Heart left ventricle (tissue), 16 donors: ENCODE measurements at regions of chr5 and their contacts with region 1.

Region 1: GRCh38 chr5:55691265-55692105 is 20.6 kb downstream of the SLC38A9 start:
- DNase-seq: no peak
- ATAC-seq: peak; percentile 34 to 73 (median 56)
- H3K4me3 ChIP-seq: peak overlapping the region in 3 of 12 donors; percentile 3 to 36 (median 17)
- H3K27ac ChIP-seq: peak overlapping the region in 8 of 12 donors; percentile 8 to 64 (median 34)
- H3K4me1 ChIP-seq: peaks cover 5 to 33% (median 19%) of the 10 kb centered on the region in 12 donors
- H3K27me3 ChIP-seq: no peaks in the 10 kb centered on the region
- CTCF ChIP-seq: peak; percentile 55 to 80 (median 74)
- POLR2A ChIP-seq: no peak

Region 2: DNA sequence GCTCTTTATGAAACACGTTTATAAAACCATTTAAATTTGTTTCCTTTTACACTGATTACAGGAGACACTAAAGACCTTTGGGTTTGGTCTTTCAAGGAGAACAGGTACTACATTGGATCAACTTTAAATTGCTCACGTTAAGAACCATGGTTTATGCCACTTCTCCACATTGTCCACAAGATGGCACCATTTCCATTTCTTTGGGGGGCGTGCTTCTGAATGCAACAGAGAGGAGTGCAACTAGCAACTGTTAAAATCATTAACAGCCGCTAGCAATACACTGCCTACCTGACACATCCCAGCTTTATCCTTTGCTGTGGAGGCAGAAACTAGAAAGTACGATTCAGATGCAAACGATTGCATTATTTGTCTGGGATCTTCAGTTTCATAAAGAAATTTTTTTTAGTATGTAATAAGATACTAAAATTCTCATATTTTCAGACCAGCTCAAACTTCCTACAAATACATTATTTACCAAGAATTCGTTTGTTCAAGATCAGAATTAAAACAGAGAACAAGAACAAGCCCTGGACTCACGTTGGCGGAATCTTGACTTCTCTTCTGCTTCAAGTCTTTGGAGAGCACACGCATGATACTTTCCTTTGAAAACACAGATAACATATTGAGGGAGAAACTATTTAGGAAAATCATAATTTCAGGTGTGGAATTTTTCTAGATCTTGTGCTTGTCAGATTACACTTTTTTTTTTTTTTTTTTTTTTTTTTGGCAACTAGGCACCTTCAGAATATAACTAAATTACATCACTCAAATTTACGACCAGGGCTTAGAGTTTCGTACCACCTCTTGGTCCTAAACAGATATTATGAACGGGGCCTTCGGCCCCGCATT is 519.2 kb before region 1 on chr5:
- intact Hi-C with region 1: loop called in 6 of 10 experiments (anchors 2 to 10 kb)
- DNase-seq: peak in 3 of 5 donors; percentile 30 to 54 (median 33)
- ATAC-seq: peak; percentile 77 to 86 (median 81)
- H3K4me3 ChIP-seq: peak overlapping the region; percentile 29 to 63 (median 50)
- H3K27ac ChIP-seq: no peak overlapping the region
- H3K4me1 ChIP-seq: peaks cover 5 to 32% (median 24%) of the 10 kb centered on the region in 12 donors
- H3K27me3 ChIP-seq: peaks cover 26 to 65% (median 43%) of the 10 kb centered on the region in 9 donors
- CTCF ChIP-seq: peak; percentile 74 to 89 (median 81)
- POLR2A ChIP-seq: no peak

Region 3: GRCh38 chr5:55344392-55344992 is 347.0 kb before region 1 on chr5:
- intact Hi-C with region 1: loop called (anchors 1 to 5 kb)
- DNase-seq: peak in 2 of 5 donors; percentile 32 to 42
- ATAC-seq: peak in 1 of 4 donors; percentile 34
- H3K4me3 ChIP-seq: no peak overlapping the region
- H3K27ac ChIP-seq: no peak overlapping the region
- H3K4me1 ChIP-seq: no peaks in the 10 kb centered on the region
- H3K27me3 ChIP-seq: no peaks in the 10 kb centered on the region
- CTCF ChIP-seq: peak; percentile 79 to 92 (median 88)
- POLR2A ChIP-seq: no peak

Region 4: DNA sequence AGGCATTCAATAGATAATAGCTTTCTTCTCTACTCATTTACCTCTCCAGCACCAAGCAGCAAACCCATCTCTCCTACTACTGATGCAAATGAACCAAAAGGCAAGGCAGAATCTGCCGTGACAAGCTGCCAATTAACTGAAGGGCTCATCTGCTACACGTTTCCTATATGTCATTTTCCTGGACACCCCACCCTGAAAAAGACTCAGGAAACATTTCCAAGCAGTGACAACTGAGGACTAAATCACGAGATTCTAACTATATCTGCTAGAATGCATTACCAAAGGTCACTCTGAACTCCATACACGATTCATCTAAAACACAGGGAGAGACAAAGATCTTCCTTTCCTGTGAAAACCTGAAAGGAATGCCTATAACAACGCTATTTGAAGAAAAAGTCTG is 169.6 kb before region 1 on chr5:
- intact Hi-C with region 1: loop called in 1 of 10 experiments (anchors 5 kb)
- DNase-seq: no peak
- ATAC-seq: peak in 2 of 4 donors; percentile 37 to 63
- H3K4me3 ChIP-seq: no peak overlapping the region
- H3K27ac ChIP-seq: peak overlapping the region in 5 of 12 donors; percentile 11 to 36 (median 14)
- H3K4me1 ChIP-seq: peaks cover 0 to 71% (median 22%) of the 10 kb centered on the region in 12 donors
- H3K27me3 ChIP-seq: no peaks in the 10 kb centered on the region
- CTCF ChIP-seq: no peak
- POLR2A ChIP-seq: no peak

Region 5: DNA sequence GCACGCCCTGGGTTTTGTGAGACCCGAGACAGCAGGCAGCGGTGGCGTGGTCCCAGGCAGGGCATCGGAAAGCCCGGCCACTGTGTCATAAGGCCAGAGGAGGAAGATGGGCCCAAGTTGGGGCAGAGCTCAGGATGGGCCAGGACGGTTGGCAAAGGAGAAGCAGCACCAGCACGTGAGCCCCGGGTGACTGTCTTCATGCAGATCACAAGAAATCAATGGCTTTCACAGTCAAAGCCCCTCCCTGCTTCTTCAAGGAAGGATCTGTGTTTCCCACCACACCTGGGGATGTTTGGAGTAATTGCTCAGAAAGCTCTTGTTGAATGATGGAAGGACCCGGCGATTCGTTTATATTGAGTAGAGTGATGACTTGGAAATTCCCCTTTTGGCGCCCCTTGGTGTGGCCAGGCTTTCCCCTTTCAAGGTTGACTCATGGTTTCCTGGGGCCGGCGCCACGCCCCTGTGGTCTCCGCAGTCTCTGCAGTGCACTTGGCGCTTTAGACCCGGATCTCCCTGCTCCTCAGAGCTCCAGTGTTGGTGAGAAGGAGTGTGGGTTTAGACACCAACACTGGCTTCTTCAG is 211.7 kb after region 1 on chr5:
- intact Hi-C with region 1: no loop called
- DNase-seq: no peak
- ATAC-seq: peak in 3 of 4 donors; percentile 20 to 56 (median 37)
- H3K4me3 ChIP-seq: no peak overlapping the region
- H3K27ac ChIP-seq: no peak overlapping the region
- H3K4me1 ChIP-seq: peaks cover 0 to 14% (median 0%) of the 10 kb centered on the region in 12 donors
- H3K27me3 ChIP-seq: no peaks in the 10 kb centered on the region
- CTCF ChIP-seq: no peak
- POLR2A ChIP-seq: no peak